ENCODE measurements at regions of chr6 and their contacts with region 1.

Region 1: GRCh38 chr6:121498481-121499276 is 63.2 kb downstream of the GJA1 start:
- DNase-seq: no peak
- H3K4me3 ChIP-seq: no peak overlapping the region
- H3K27ac ChIP-seq: no peak overlapping the region
- H3K4me1 ChIP-seq: no peaks in the 10 kb centered on the region
- H3K27me3 ChIP-seq: no peaks in the 10 kb centered on the region
- CTCF ChIP-seq: no peak
- EP300 ChIP-seq: no peak
- POLR2A ChIP-seq: no peak

Region 2: GRCh38 chr6:121522771-121523386 is 24.2 kb after region 1 on chr6:
- in situ Hi-C with region 1: no loop called
- intact Hi-C with region 1: loop called (anchors 1 kb)
- DNase-seq: no peak
- H3K4me3 ChIP-seq: no peak overlapping the region
- H3K27ac ChIP-seq: peak overlapping the region; percentile 18 to 55 (median 38)
- H3K4me1 ChIP-seq: no peaks in the 10 kb centered on the region
- H3K27me3 ChIP-seq: no peaks in the 10 kb centered on the region
- CTCF ChIP-seq: no peak
- EP300 ChIP-seq: no peak
- POLR2A ChIP-seq: no peak